Dorsolateral prefrontal cortex (tissue), 120 donors: ENCODE measurements at regions of chr10 and their contacts with region 1.

Region 1: DNA sequence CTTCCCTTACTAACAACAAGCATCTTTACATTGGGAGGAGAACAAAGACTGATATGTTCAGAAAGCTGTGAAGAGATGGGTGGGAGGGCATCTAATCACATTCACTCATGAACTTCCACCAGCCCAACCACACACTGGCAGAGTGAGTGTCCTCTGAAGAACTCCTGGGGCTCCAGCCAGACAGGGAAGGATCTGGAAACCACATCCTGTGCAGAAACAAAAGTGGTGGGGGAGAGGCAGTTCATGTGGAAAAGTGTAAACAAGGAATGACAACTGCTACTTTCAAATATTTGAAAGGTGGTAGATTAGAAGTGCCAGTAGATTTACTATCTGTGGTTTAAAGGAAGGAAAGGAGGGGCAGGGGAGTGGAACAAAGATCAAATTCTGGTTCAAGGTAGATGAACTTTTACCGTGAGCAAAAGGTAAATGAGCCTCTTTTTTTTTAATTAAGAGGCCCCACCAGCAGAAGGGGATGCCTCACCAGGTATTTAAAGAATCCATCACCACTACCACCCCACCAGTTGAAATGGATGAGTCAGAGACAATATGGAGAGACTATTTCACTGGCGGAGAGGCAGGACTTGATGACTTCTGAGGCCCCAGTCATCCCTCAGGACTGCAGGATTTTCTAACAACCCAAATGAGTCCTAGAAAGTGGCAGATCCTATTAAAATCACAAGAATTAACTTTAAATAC is 34.5 kb downstream of the GOT1 start:
- DNase-seq: peak in 1 of 10 donors; percentile 33
- H3K4me3 ChIP-seq: no peak overlapping the region
- H3K27ac ChIP-seq: peak overlapping the region in 53 of 59 donors; percentile 6 to 81 (median 60)
- H3K27me3 ChIP-seq: no peaks in the 10 kb centered on the region
- CTCF ChIP-seq: no peak

Region 2: GRCh38 chr10:99084161-99084560 is 311.7 kb before region 1 on chr10:
- intact Hi-C with region 1: no loop called
- DNase-seq: no peak
- H3K4me3 ChIP-seq: no peak overlapping the region
- H3K27ac ChIP-seq: peak overlapping the region in 10 of 59 donors; percentile 1 to 73 (median 34)
- H3K27me3 ChIP-seq: no peaks in the 10 kb centered on the region
- CTCF ChIP-seq: no peak

Region 3: GRCh38 chr10:99430451-99431189 is 34.7 kb after region 1 on chr10 and contains the start of gene GOT1:
- intact Hi-C with region 1: loop called in 1 of 2 experiments (anchors 2 kb)
- DNase-seq: peak; percentile 87 to 97 (median 96)
- H3K4me3 ChIP-seq: peak within 1 kb of the TSS; percentile 74 to 100 (median 97)
- H3K27ac ChIP-seq: peak within 1 kb of the TSS; percentile 58 to 99 (median 93)
- H3K27me3 ChIP-seq: no peaks in the 10 kb centered on the region
- CTCF ChIP-seq: peak in 18 of 56 donors; percentile 5 to 52 (median 28)
- total RNA-seq, gene GOT1: 81.6 to 316 (median 220) TPM

Region 4: DNA sequence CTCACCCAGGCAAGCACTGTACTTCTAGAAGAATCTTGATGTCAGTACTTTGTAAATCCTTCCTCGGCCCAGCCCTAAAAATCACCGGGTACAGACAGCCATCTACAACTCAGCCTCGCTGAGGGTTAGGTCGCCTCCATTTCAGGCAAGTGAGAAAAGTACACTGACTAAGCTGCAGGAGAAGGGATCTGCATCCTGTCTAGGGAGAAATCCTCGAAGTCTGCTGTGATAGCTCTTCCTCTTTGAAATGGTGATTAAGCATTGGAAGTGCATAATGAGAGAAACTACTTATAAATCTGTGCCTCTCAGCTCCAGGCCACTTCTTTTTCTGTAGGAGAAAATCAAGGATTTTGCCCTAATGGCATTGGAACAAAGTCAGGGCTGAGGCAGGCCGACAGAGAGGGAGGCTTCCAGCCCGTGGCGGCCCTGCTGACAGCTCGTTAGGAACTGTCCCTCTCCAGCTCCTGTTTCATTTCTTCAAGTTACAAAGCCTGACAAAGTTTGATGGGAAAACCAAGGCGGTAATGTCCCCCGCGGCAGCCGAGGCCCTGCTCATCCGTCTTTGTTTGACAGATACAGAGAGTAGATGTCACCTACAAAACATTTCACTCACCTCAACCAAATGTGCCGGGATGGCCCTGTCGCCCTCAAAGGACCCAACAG is 48.6 kb after region 1 on chr10:
- intact Hi-C with region 1: no loop called
- DNase-seq: no peak
- H3K4me3 ChIP-seq: peak overlapping the region in 1 of 59 donors; percentile 10
- H3K27ac ChIP-seq: no peak overlapping the region
- H3K27me3 ChIP-seq: peaks cover 0 to 11% (median 0%) of the 10 kb centered on the region in 45 donors
- CTCF ChIP-seq: no peak

Region 5: GRCh38 chr10:99612167-99612831 is 216.4 kb after region 1 on chr10:
- intact Hi-C with region 1: loop called (anchors 1 to 5 kb)
- DNase-seq: peak in 2 of 10 donors; percentile 14 to 30
- H3K4me3 ChIP-seq: no peak overlapping the region
- H3K27ac ChIP-seq: peak overlapping the region in 3 of 59 donors; percentile 5 to 29 (median 25)
- H3K27me3 ChIP-seq: no peaks in the 10 kb centered on the region
- CTCF ChIP-seq: peak; percentile 75 to 92 (median 86)

Region 6: GRCh38 chr10:99711129-99711719 is 315.3 kb after region 1 on chr10:
- intact Hi-C with region 1: loop called in 1 of 2 experiments (anchors 5 kb)
- DNase-seq: no peak
- H3K4me3 ChIP-seq: no peak overlapping the region
- H3K27ac ChIP-seq: no peak overlapping the region
- H3K27me3 ChIP-seq: no peaks in the 10 kb centered on the region
- CTCF ChIP-seq: peak in 52 of 56 donors; percentile 17 to 71 (median 51)